Ascending aorta (tissue), 2 donors: ENCODE measurements at regions of chr11 and their contacts with region 1.

Region 1: DNA sequence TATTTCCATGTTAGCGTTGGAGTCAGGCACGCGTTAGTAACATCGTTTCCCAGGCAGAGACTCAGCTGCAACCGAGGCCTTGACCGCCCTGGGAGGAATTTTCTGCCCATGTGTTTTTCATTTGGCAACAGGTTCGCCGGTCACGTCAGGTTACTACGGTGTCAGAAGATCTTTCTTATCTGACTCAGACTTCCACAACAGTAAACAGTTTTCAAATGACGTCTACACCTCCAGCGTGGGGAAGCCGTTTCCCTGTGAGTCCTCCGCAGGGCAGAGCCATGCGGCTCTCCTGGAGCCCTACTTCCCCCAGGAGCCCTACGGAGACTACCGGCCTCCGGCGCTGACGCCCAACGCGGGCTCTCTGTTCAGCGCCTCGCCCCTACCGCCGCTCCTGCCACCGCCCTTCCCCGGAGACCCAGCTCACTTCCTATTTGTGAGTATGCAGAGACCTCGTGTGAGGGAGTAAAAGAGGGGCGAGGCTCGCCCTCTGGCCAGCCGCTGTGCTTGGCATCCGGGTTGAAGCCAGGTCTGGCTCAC is 14.3 kb upstream of the POU2AF3 start:
- DNase-seq: no peak
- H3K4me3 ChIP-seq: no peak overlapping the region
- H3K27ac ChIP-seq: no peak overlapping the region
- H3K4me1 ChIP-seq: no peaks in the 10 kb centered on the region
- H3K27me3 ChIP-seq: no peaks in the 10 kb centered on the region
- CTCF ChIP-seq: no peak

Region 2: DNA sequence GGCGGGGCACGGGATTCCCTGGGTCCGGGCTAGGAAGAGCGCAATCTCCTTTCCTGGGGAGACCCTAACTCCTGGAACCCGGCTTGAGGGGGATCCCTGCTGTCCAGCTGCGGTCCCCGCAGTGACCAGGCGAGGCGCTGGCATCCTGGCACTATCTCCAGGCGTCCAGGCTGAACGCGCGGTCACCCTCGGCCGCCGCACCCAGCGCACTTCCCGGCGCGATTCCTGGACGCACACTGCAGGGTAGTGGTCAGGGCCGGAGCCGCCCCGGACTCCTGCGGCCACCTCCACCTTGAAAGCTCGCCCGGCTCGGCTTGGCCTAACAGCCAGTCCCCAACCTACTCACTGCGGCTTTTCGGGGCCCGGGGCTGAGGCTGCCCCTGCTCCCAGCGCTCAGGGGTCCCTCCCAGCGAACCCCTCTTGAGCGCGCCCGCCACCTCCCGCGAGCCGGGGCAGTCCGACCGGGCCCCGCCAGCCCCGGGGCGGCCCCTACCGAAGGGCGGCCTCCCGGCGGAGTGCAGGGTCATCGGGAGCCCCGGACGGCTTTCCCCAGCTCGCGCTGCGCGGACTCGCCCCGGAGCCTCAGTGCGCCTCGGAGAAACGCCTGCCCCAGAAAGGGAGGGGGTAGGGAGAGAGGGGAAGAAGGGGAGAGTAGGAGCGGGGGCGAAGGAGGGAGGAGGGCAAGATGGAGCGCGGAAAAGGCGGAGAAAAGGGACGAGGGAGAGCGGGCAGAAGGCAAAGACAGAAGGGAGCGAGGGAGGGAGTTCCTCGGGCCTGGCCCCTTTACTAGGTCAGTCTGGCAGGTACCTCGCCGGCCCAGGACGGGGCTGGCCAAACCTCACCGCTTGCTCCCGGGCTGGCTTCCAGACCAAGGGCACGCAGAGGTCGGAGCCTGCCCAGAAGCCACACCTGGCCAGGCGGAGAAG is 15.4 kb after region 1 on chr11:
- intact Hi-C with region 1: loop called (anchors 2 kb)
- DNase-seq: peak in 1 of 2 donors; percentile 78
- H3K4me3 ChIP-seq: peak overlapping the region; percentile 49 to 81
- H3K27ac ChIP-seq: peak overlapping the region; percentile 58 to 87
- H3K4me1 ChIP-seq: peaks cover 0 to 5% of the 10 kb centered on the region in 2 donors
- H3K27me3 ChIP-seq: no peaks in the 10 kb centered on the region
- CTCF ChIP-seq: peak; percentile 71 to 76 (median 75)

Region 3: GRCh38 chr11:111422494-111423249 is 138.7 kb after region 1 on chr11:
- intact Hi-C with region 1: loop called (anchors 1 kb)
- DNase-seq: peak in 1 of 2 donors; percentile 72
- H3K4me3 ChIP-seq: no peak overlapping the region
- H3K27ac ChIP-seq: no peak overlapping the region
- H3K4me1 ChIP-seq: peaks cover 10 to 17% of the 10 kb centered on the region in 2 donors
- H3K27me3 ChIP-seq: no peaks in the 10 kb centered on the region
- CTCF ChIP-seq: peak; percentile 70 to 91 (median 72)

Region 4: DNA sequence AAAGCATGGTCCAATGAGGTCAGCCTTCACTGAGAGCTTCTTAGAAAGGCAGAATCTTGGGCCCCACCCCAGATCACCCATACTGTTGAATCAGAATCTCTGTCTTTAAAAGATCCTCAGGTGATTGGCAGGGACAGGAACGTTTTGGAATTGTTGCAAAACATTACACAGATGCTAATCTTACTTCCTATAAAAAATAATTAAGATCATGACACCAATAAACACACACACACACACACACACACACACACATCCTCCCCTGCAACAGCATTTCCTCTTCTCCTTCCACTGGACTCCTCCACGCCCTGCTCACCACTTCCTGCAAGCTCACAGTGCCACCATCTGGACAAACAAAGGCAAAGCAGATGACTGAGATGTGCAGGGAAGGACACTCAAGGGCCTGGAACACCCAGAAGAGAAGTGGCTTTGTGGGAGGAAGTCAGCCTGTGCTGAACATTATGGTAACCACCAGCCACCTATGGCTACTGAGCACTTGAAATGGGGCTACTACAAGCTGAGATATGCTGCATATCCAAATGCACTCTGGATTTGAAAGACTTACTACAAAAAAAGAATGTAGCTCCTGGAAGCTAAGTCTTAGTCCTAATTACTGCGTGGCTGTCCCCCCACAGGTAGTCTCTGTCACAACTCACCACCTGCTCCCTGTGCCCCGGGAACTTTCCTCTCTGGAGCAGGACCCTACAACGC is 162.5 kb after region 1 on chr11:
- intact Hi-C with region 1: loop called (anchors 1 kb)
- DNase-seq: peak; percentile 51 to 85
- H3K4me3 ChIP-seq: no peak overlapping the region
- H3K27ac ChIP-seq: no peak overlapping the region
- H3K4me1 ChIP-seq: peaks cover 0 to 3% of the 10 kb centered on the region in 2 donors
- H3K27me3 ChIP-seq: no peaks in the 10 kb centered on the region
- CTCF ChIP-seq: peak; percentile 72 to 77 (median 74)